Lower leg skin (tissue), 4 donors: ENCODE measurements at regions of chr10 and their contacts with region 1.

Region 1: DNA sequence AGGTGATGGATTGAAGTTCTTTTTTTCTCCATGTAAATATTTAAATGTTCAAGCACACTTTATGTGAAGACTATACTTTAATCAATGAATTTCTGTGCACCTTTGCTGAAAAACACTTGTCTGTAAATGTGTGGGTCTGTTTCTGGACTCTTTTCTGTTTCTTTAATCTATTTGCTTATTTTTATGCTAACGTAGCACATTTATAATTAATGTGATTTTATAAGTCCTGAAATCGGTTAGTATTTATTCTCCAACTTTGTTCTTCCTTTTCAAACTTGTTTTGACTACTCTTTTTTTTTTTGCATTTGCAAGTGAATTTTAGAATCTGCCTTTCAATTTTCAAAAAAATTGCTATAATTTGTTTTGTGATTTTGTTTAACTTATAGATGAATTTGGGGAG is 334.4 kb downstream of the ATRNL1 start:
- DNase-seq: no peak
- H3K4me3 ChIP-seq: no peak overlapping the region
- CTCF ChIP-seq: no peak
- POLR2A ChIP-seq: no peak

Region 2: GRCh38 chr10:114285961-114286441 is 1141.6 kb before region 1 on chr10:
- intact Hi-C with region 1: no loop called
- DNase-seq: no peak
- H3K4me3 ChIP-seq: no peak overlapping the region
- CTCF ChIP-seq: no peak
- POLR2A ChIP-seq: no peak

Region 3: GRCh38 chr10:115829521-115830205 is 402.1 kb after region 1 on chr10:
- intact Hi-C with region 1: loop called (anchors 5 kb)
- DNase-seq: no peak
- H3K4me3 ChIP-seq: no peak overlapping the region
- CTCF ChIP-seq: no peak
- POLR2A ChIP-seq: no peak

Region 4: DNA sequence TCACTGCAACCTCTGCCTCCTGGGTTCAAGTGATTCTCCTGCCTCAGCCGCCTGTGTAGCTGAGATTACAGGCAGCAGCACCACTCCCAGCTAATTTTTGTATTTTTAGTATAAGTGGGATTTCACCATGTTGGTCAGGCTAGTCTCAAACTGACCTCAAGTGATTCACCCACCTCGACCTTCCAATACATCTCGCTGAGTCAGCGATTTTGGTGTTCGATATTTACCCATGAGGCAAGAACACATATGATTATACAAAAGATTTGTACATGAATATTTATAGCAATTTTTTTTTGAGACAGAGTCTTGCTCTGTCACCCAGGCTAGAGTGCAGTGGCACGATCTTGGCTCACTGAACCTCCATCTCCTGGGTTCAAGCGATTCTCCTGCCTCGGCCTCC is 1137.9 kb after region 1 on chr10:
- intact Hi-C with region 1: no loop called
- DNase-seq: no peak
- H3K4me3 ChIP-seq: no peak overlapping the region
- CTCF ChIP-seq: no peak
- POLR2A ChIP-seq: no peak